ENCODE measurements at regions of chr3 and their contacts with region 1.

Region 1: DNA sequence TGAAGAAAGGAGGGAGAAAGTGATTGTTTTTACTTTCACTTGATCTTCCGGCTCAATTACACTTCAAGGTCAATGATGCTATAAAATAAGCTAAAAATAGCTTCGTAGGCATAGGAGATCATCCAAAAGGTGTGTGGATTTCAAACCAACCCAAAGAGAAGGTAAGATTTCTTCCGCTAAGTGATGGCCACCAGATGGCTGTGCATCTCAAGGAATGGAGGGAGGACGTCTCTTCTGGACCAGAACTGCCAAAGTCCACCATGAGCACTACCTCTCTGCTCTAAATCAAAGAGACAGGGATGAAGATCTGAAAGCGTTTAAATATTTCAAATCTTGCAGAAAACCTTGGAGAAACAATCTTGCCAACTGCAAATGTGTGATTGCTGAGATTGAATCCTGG is 199.1 kb upstream of the ZPLD1 start:
- DNase-seq: no peak
- ATAC-seq: no peak
- H3K4me3 ChIP-seq: no peak overlapping the region
- H3K27ac ChIP-seq: no peak overlapping the region
- H3K4me1 ChIP-seq: no peaks in the 10 kb centered on the region
- H3K27me3 ChIP-seq: no peaks in the 10 kb centered on the region
- CTCF ChIP-seq: no peak
- POLR2A ChIP-seq: no peak

Region 2: GRCh38 chr3:102434715-102435114 is 199.0 kb after region 1 on chr3 and contains the start of gene ZPLD1:
- intact Hi-C with region 1: no loop called
- DNase-seq: no peak
- ATAC-seq: no peak
- H3K4me3 ChIP-seq: no peak within 1 kb of the TSS
- H3K27ac ChIP-seq: no peak within 1 kb of the TSS
- H3K4me1 ChIP-seq: no peaks in the 10 kb centered on the region
- H3K27me3 ChIP-seq: no peaks in the 10 kb centered on the region
- CTCF ChIP-seq: no peak
- POLR2A ChIP-seq: no peak
- total RNA-seq, gene ZPLD1: 0.04 to 0.12 (median 0.07) TPM in 4 of 6 experiments, not detected in the others

Region 3: DNA sequence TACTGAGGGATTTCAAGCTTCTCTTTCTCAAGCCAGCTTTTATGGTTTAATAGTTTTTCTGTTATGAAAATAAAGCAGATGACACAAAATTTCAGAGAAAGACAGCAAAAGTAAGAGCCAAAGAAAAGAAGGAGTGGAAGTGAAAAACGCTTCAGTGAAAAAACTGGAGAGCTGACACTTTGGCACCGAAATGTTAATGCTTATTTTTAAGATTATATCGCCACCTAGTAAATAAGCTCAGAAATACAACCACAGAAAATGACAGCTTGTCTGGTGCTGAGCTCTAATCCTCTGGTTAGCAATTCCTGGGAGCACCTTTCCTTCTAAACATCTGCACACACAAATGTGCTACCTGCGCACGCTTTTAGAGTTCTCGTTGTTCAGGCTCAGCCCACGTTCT is 300.8 kb after region 1 on chr3:
- intact Hi-C with region 1: loop called (anchors 10 kb)
- DNase-seq: no peak
- ATAC-seq: peak; percentile 85 to 94 (median 90)
- H3K4me3 ChIP-seq: no peak overlapping the region
- H3K27ac ChIP-seq: no peak overlapping the region
- H3K4me1 ChIP-seq: no peaks in the 10 kb centered on the region
- H3K27me3 ChIP-seq: no peaks in the 10 kb centered on the region
- CTCF ChIP-seq: peak; percentile 45 to 55 (median 50)
- POLR2A ChIP-seq: no peak

Region 4: DNA sequence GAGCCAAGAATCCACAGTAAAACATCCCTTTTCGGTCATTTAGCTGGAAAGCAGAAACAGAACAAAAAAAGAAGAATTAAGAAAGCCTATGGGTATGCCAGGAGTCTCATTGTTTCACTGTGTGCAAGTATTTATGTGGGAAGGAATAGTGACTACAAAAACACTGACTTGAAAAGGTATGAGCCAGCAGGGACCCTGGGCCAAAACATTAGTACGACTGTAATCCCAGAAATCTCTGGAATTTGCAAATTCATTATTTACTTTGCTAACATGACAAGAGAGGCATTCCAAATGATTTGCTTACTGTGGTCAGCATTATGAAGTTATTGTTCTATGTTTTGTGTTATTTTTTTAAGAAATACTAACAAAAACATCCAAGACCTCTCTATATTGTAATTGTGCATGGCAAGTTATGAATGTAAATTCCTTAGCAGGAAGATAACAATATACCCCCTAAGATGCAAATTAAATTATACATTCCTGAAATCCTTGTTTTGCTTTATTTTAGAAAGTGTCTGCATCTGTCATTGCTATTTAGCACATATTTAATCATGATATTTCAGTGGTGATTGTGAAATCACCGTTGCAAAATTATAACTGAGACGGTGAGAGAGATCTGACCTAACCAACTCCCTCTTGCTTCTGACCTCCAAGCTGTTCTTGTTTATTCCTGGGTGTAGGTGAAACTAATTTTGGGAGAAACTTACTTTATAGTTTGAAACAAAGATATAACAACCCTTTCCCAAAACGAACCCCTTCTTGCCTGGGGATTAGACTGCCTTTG is 498.3 kb after region 1 on chr3:
- intact Hi-C with region 1: loop called in 1 of 2 experiments (anchors 10 kb)
- DNase-seq: no peak
- ATAC-seq: peak in 1 of 4 donors; percentile 28
- H3K4me3 ChIP-seq: no peak overlapping the region
- H3K27ac ChIP-seq: no peak overlapping the region
- H3K4me1 ChIP-seq: no peaks in the 10 kb centered on the region
- H3K27me3 ChIP-seq: no peaks in the 10 kb centered on the region
- CTCF ChIP-seq: no peak
- POLR2A ChIP-seq: no peak

Measured in right lobe of liver (tissue), 6 donors.